GM10248 (cell line): ENCODE measurements at regions of chr12 and their contacts with region 1.

Region 1: DNA sequence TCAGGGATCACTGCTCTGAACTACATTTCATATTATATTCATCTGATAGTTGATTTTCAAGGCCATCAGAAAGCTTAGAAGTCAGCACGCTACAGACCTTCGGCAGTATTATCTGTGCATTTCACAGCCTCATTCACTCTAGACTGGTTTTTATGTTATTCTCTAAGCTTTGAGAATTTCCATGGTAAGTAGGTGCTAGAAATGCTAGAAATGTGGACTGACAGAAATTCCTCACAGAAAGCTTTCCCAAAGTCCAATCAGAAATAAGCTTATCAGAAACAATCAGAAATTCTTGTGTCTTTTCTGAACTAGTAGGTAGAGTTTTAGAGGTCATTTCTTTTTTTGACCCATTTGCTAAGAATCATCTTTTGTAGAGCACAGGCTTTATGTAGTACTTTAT is 176.6 kb downstream of the TMTC3 start:
- DNase-seq: no peak
- CTCF ChIP-seq: no peak

Region 2: GRCh38 chr12:88334271-88334670 is 15.5 kb after region 1 on chr12:
- CTCF ChIA-PET with region 1: interaction called, 23 read pairs
- POLR2A ChIA-PET with region 1: no interaction called
- DNase-seq: no peak
- CTCF ChIP-seq: no peak